ENCODE measurements at regions of chr6 and their contacts with region 1.

Region 1: DNA sequence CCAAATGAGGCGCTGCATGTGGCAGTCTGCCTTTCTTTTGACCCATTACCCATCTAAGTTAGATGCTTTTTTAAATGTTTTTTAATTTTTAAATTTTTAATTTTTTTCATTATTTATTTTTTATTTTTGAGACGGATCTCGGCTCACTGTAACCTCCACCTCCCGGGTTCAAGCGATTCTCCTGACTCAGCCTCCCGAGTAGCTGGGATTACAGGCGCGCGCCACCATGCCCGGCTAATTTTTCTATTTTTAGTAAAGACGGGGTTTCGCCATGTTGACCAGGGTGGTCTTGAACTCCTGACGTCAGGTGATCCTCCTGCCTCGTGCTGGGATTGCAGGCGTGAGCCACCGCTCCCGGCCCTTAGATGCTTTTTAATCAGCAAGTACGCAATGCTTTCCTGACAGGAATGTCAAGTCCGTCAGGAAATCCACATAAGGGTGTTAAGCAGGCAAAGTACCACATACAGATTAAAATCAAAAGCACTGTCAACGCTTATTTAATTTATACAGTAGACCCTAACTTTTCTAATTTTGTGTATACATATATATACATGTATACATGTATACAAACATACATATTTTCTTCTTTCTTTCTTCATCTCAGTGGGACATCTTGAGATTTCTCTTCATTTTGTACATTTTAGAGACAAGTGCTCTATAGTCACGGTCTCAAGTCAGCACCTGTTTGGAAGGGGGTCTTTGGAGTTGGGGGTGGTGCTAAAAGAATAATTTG is 995 bp upstream of the GSTA4 start:
- DNase-seq: peak; percentile 46 to 52
- ATAC-seq: peak; percentile 0 to 18 (median 8)
- H3K4me3 ChIP-seq: peak overlapping the region; percentile 49
- H3K27ac ChIP-seq: peak overlapping the region; percentile 93
- H3K4me1 ChIP-seq: peaks cover 19% of the 10 kb centered on the region
- H3K27me3 ChIP-seq: no peaks in the 10 kb centered on the region
- CTCF ChIP-seq: no peak

Region 2: GRCh38 chr6:52155791-52156576 is 840.1 kb before region 1 on chr6:
- intact Hi-C with region 1: loop called in 1 of 2 experiments (anchors 10 kb)
- DNase-seq: no peak
- ATAC-seq: peak; percentile 37 to 74 (median 53)
- H3K4me3 ChIP-seq: no peak overlapping the region
- H3K27ac ChIP-seq: peak overlapping the region; percentile 27
- H3K4me1 ChIP-seq: peaks cover 7% of the 10 kb centered on the region
- H3K27me3 ChIP-seq: no peaks in the 10 kb centered on the region
- CTCF ChIP-seq: no peak

Region 3: GRCh38 chr6:52419809-52420670 is 576.0 kb before region 1 on chr6 and contains the start of gene EFHC1:
- intact Hi-C with region 1: loop called in 1 of 2 experiments (anchors 10 kb)
- DNase-seq: peak; percentile 98 to 99
- ATAC-seq: peak; percentile 99
- H3K4me3 ChIP-seq: peak within 1 kb of the TSS; percentile 84
- H3K27ac ChIP-seq: peak within 1 kb of the TSS; percentile 76
- H3K4me1 ChIP-seq: no peaks in the 10 kb centered on the region
- H3K27me3 ChIP-seq: no peaks in the 10 kb centered on the region
- CTCF ChIP-seq: no peak
- total RNA-seq, gene EFHC1: 1.5 to 2.1 (median 1.7) TPM

Region 4: DNA sequence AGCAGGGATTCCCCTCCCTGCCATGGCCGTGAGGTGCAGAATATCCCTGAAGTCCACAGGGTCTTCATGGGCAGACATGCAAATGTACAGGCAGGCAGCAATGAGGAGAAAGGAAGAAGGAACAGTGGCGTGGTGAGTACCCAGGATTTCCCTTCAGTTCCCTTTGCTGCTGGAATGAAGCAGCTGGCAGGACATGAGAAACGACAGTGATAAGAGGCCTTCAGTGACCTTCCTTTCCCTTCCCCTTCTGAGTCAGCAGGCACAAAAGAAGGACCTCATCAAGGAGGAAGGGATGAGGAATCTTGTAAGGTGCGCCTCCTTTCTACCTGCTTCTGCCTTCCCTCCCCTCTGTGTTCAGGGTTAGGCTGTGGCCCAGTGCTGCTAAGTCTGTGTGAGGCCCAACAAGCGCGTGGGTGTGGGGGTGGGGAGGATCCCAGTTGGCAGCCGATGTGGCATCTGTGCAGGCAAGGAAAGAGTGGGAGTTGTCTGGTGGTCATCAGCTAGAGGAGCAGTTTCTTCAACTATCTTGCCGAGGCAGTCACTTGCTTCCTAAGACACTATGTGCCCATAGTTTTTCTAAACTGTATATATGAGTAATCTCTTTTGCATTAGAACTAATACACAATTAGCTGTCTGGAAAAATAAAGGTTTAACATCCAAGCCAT is 39.6 kb after region 1 on chr6:
- intact Hi-C with region 1: loop called (anchors 5 kb)
- DNase-seq: no peak
- ATAC-seq: no peak
- H3K4me3 ChIP-seq: no peak overlapping the region
- H3K27ac ChIP-seq: no peak overlapping the region
- H3K4me1 ChIP-seq: peaks cover 23% of the 10 kb centered on the region
- H3K27me3 ChIP-seq: no peaks in the 10 kb centered on the region
- CTCF ChIP-seq: no peak

Region 5: DNA sequence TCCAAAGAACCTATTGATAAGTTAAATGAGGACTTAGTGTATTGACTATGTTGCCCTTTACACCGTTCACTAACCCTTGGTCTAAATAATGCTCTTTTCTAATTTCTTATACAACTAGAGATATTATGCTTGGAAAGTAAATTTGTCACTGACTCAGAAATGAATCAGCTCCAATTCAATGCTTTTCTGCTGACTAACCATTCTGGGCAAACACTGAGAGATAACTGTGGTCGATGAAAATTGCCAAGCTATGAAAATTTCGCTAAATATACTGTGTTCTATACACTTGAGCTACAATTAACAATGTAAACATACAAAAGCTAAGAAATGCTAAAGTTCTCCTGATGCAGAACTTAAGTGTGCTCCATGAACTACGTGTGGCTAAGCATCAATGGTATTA is 46.0 kb after region 1 on chr6:
- intact Hi-C with region 1: loop called (anchors 5 kb)
- DNase-seq: no peak
- ATAC-seq: peak; percentile 59 to 70 (median 68)
- H3K4me3 ChIP-seq: no peak overlapping the region
- H3K27ac ChIP-seq: peak overlapping the region; percentile 42
- H3K4me1 ChIP-seq: peaks cover 29% of the 10 kb centered on the region
- H3K27me3 ChIP-seq: no peaks in the 10 kb centered on the region
- CTCF ChIP-seq: no peak

Region 6: GRCh38 chr6:53484476-53485280 is 488.6 kb after region 1 on chr6:
- intact Hi-C with region 1: loop called in 1 of 2 experiments (anchors 10 kb)
- DNase-seq: no peak
- ATAC-seq: peak; percentile 54 to 87 (median 70)
- H3K4me3 ChIP-seq: peak overlapping the region; percentile 44
- H3K27ac ChIP-seq: no peak overlapping the region
- H3K4me1 ChIP-seq: peaks cover 7% of the 10 kb centered on the region
- H3K27me3 ChIP-seq: no peaks in the 10 kb centered on the region
- CTCF ChIP-seq: peak; percentile 96

Measured in psoas muscle (tissue), 8 donors.